ENCODE measurements at regions of chr17 and their contacts with region 1.

Region 1: DNA sequence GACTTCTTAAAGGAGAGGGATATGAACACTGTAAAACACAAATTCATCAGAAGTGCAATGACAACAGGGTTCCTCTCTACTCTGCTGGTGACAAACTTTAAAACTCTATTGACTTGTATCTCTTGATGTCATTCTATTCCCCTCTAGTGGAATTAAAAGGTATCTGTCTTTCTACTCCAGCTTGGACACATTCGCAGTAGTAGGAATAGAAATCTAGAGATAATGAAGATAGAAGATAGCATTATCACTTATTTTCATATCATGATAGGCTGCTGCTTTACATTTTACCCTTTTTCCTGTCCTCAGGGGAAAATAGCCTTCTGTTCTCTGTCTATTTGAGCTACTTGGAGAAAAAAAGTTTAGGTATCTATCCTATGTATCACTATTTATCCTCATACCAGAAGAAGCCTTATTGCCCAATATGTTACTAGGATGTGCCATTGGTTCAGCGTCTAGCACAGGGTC is 209.6 kb upstream of the CACNG5 start:
- DNase-seq: peak; percentile 73
- ATAC-seq: peak; percentile 96
- H3K4me3 ChIP-seq: no peak overlapping the region
- H3K27ac ChIP-seq: no peak overlapping the region
- H3K4me1 ChIP-seq: no peaks in the 10 kb centered on the region
- H3K27me3 ChIP-seq: no peaks in the 10 kb centered on the region
- CTCF ChIP-seq: peak; percentile 94

Region 2: GRCh38 chr17:66255112-66255511 is 370.2 kb before region 1 on chr17:
- CTCF ChIA-PET with region 1: no interaction called
- POLR2A ChIA-PET with region 1: no interaction called
- intact Hi-C with region 1: loop called (anchors 1 kb)
- DNase-seq: peak; percentile 93
- ATAC-seq: peak; percentile 94
- H3K4me3 ChIP-seq: no peak overlapping the region
- H3K27ac ChIP-seq: no peak overlapping the region
- H3K4me1 ChIP-seq: peaks cover 8% of the 10 kb centered on the region
- H3K27me3 ChIP-seq: no peaks in the 10 kb centered on the region
- CTCF ChIP-seq: peak; percentile 96

Region 3: DNA sequence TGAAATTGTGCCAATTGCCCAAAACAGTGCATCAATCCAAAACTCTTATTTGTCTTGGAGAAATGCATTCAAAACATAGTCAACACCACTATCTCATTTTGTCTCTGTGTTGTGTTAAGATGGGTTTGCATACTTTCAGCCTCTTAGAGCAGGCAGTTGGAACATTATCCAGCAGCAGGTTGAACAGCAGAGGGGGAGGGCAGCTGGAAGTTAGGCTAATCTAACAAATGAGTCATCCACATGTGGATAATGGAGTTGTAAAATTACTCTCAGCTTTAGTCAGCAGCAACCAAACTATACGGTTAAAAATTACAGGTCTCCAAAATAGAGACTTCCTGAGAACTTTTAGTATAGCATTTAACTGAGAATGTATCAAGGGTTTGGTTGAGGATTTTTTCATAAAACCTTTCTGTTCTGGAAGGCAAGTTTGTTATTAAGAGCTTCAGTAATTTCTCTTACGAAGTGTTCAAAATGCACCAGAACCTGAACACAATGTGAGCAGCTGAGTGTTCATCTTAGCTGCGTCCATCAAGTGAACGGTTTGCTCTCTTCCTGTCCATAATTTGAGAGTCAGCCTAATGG is 276.7 kb before region 1 on chr17:
- CTCF ChIA-PET with region 1: no interaction called
- POLR2A ChIA-PET with region 1: no interaction called
- intact Hi-C with region 1: loop called (anchors 2 kb)
- DNase-seq: peak; percentile 92
- ATAC-seq: peak; percentile 82
- H3K4me3 ChIP-seq: peak overlapping the region; percentile 51
- H3K27ac ChIP-seq: peak overlapping the region; percentile 90
- H3K4me1 ChIP-seq: peaks cover 62% of the 10 kb centered on the region
- H3K27me3 ChIP-seq: no peaks in the 10 kb centered on the region
- CTCF ChIP-seq: no peak

Region 4: GRCh38 chr17:66459811-66460270 is 165.5 kb before region 1 on chr17:
- CTCF ChIA-PET with region 1: no interaction called
- POLR2A ChIA-PET with region 1: no interaction called
- intact Hi-C with region 1: loop called (anchors 2 kb)
- DNase-seq: peak; percentile 97
- ATAC-seq: peak; percentile 91
- H3K4me3 ChIP-seq: peak overlapping the region; percentile 8; the same call in 1 of the 2 replicates
- H3K27ac ChIP-seq: peak overlapping the region; percentile 71
- H3K4me1 ChIP-seq: peaks cover 55% of the 10 kb centered on the region
- H3K27me3 ChIP-seq: no peaks in the 10 kb centered on the region
- CTCF ChIP-seq: no peak

Region 5: DNA sequence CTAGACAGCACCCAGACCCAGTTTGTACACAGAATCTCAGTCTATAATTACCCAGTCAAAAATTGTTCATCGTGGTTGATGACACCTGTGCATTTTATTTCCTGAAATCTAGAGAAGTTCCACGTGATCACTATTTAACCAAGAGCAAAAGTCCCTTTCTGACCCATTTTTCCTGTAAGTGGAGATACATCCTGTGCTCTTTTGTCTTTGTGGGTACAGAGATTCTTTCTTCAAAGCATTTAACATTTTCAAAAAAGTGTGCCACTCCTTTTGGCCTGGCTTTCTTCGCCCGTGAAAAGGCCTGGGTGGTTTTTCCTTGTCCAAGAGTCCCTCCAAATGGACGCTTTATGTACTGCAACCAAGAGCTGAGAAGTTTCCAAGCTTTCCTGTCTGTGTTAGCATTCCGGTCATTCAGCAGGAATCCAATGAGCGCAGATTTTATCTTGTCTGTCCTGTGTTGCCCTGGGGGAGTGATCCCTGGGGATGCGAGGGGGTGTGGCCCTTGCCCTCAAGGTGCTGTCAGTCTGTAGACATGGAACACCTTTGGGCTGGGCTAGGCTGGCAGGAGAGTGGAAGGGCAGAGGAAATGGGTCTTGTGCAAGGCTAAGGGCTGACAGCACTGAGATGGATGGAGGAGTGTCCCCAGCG is 48.4 kb after region 1 on chr17:
- CTCF ChIA-PET with region 1: no interaction called
- POLR2A ChIA-PET with region 1: interaction called, 4 read pairs
- intact Hi-C with region 1: loop called (anchors 1 kb)
- DNase-seq: peak; percentile 92
- ATAC-seq: peak; percentile 32
- H3K4me3 ChIP-seq: no peak overlapping the region
- H3K27ac ChIP-seq: no peak overlapping the region
- H3K4me1 ChIP-seq: peaks cover 42% of the 10 kb centered on the region
- H3K27me3 ChIP-seq: no peaks in the 10 kb centered on the region
- CTCF ChIP-seq: peak; percentile 97

Measured in PC-3 (cell line).